Breast epithelium (tissue), 4 donors: ENCODE measurements at regions of chr19 and their contacts with region 1.

Region 1: GRCh38 chr19:6424939-6425731 is 524 bp upstream of the KHSRP start:
- DNase-seq: peak; percentile 100
- H3K4me3 ChIP-seq: peak overlapping the region; percentile 76 to 96 (median 84)
- H3K27ac ChIP-seq: peak overlapping the region; percentile 82 to 92
- H3K4me1 ChIP-seq: peaks cover 3 to 11% of the 10 kb centered on the region in 2 donors
- H3K27me3 ChIP-seq: no peaks in the 10 kb centered on the region
- CTCF ChIP-seq: no peak
- POLR2A ChIP-seq: no peak

Region 2: GRCh38 chr19:6378041-6378440 is 47.1 kb before region 1 on chr19:
- intact Hi-C with region 1: loop called (anchors 2 kb)
- DNase-seq: peak in 1 of 2 donors; percentile 58
- H3K4me3 ChIP-seq: no peak overlapping the region
- H3K27ac ChIP-seq: no peak overlapping the region
- H3K4me1 ChIP-seq: peaks cover 0 to 6% of the 10 kb centered on the region in 2 donors
- H3K27me3 ChIP-seq: no peaks in the 10 kb centered on the region
- CTCF ChIP-seq: no peak
- POLR2A ChIP-seq: no peak

Region 3: GRCh38 chr19:6455924-6456323 is 30.8 kb after region 1 on chr19:
- intact Hi-C with region 1: loop called (anchors 1 kb)
- DNase-seq: no peak
- H3K4me3 ChIP-seq: no peak overlapping the region
- H3K27ac ChIP-seq: no peak overlapping the region
- H3K4me1 ChIP-seq: peaks cover 0 to 4% of the 10 kb centered on the region in 2 donors
- H3K27me3 ChIP-seq: no peaks in the 10 kb centered on the region
- CTCF ChIP-seq: no peak
- POLR2A ChIP-seq: no peak